AG04450 (cell line): ENCODE measurements at regions of chr5 and their contacts with region 1.

Region 1: DNA sequence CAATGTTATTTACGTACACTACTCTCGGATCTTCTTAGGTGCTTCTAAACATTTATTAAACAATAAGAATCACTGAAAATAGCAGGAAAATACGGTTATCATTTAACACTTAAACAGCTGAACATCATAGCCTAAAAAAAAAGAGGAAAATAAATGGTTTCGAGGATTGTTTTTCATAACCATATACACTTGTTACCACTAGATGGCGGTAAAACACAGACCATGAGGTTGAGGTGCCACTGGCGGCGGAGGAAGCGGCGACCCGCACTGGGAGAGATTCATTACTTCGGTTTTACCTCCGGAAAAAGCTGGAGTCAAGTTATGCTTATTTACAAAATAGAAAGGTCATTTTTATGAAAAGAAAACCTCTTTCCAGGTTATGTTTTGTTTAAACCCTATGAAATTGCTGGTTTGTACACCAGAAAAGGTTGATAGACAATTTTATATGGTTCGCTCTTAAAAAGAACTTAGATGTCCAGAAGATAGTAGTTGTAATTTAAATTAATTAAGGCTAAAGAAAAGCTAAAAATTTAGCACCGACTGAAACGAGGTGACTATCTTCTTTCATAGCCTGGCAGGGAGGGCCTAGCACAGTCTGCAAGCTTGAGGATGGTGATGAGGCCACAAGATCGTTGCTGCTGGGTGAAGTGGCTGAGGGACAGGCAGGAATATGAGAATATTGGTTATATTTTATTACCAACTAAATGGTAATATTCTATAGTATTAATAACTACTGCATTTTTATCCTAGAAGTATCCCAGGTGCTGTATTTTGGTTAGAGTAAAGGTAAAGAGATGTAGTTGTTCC is 605.7 kb downstream of the RAB3C start:
- DNase-seq: no peak
- H3K4me3 ChIP-seq: peak overlapping the region; percentile 28; the same call in 1 of the 2 replicates
- H3K27ac ChIP-seq: no peak overlapping the region
- H3K27me3 ChIP-seq: no peaks in the 10 kb centered on the region
- CTCF ChIP-seq: peak; percentile 72

Region 2: GRCh38 chr5:58818462-58818861 is 370.2 kb before region 1 on chr5:
- CTCF ChIA-PET with region 1: no interaction called
- POLR2A ChIA-PET with region 1: no interaction called
- DNase-seq: no peak
- H3K4me3 ChIP-seq: no peak overlapping the region
- H3K27ac ChIP-seq: no peak overlapping the region
- H3K27me3 ChIP-seq: no peaks in the 10 kb centered on the region
- CTCF ChIP-seq: no peak

Region 3: GRCh38 chr5:59039296-59040023 is 149.2 kb before region 1 on chr5:
- CTCF ChIA-PET with region 1: interaction called, 35 read pairs
- POLR2A ChIA-PET with region 1: no interaction called
- DNase-seq: no peak
- H3K4me3 ChIP-seq: peak overlapping the region; percentile 92
- H3K27ac ChIP-seq: peak overlapping the region; percentile 74
- H3K27me3 ChIP-seq: no peaks in the 10 kb centered on the region
- CTCF ChIP-seq: no peak

Region 4: GRCh38 chr5:59212596-59212995 is 24.0 kb after region 1 on chr5:
- CTCF ChIA-PET with region 1: interaction called, 20 read pairs
- POLR2A ChIA-PET with region 1: no interaction called
- DNase-seq: no peak
- H3K4me3 ChIP-seq: no peak overlapping the region
- H3K27ac ChIP-seq: no peak overlapping the region
- H3K27me3 ChIP-seq: peaks cover 2% of the 10 kb centered on the region
- CTCF ChIP-seq: no peak

Region 5: DNA sequence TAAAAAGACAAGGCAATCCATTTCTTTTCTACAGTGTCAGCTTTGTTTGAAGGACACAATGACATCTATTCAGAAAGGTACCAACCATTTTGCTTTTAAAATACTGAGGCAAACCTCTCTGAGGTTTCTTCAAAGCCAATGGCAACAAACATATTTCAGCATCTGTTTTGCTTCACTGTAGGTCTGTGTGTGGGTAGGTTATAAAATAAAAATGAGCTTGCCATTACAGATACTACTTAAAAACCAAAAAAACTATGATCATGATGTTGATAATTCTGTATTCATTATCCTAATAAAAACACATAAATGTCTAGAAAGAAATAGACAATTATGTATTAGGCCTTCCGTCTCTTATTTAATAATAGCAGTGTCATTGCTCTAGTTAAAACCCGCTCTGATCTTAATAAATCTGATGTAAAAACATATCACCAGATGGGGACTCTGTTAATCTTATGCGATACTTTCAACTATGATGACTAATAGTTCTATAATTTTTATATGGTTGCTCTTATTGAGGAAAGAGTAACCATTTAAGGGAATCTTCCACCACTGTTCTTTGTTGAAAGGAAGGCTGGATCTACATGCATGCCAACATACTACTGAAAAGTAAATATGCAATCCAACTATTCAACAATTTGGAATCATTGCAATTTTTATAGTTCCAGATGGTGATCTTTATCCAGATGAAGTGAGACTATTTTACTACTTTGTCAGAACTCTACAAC is 57.7 kb after region 1 on chr5:
- CTCF ChIA-PET with region 1: interaction called, 11 read pairs
- POLR2A ChIA-PET with region 1: no interaction called
- DNase-seq: peak; percentile 4
- H3K4me3 ChIP-seq: no peak overlapping the region
- H3K27ac ChIP-seq: no peak overlapping the region
- H3K27me3 ChIP-seq: no peaks in the 10 kb centered on the region
- CTCF ChIP-seq: no peak

Region 6: GRCh38 chr5:59367791-59368394 is 179.3 kb after region 1 on chr5:
- CTCF ChIA-PET with region 1: interaction called, 360 read pairs
- POLR2A ChIA-PET with region 1: no interaction called
- DNase-seq: peak; percentile 36
- H3K4me3 ChIP-seq: no peak overlapping the region
- H3K27ac ChIP-seq: no peak overlapping the region
- H3K27me3 ChIP-seq: no peaks in the 10 kb centered on the region
- CTCF ChIP-seq: peak; percentile 88

Region 7: GRCh38 chr5:59390074-59390659 is 201.5 kb after region 1 on chr5:
- CTCF ChIA-PET with region 1: interaction called, 225 read pairs
- POLR2A ChIA-PET with region 1: no interaction called
- DNase-seq: no peak
- H3K4me3 ChIP-seq: no peak overlapping the region
- H3K27ac ChIP-seq: no peak overlapping the region
- H3K27me3 ChIP-seq: no peaks in the 10 kb centered on the region
- CTCF ChIP-seq: peak; percentile 67

Region 8: DNA sequence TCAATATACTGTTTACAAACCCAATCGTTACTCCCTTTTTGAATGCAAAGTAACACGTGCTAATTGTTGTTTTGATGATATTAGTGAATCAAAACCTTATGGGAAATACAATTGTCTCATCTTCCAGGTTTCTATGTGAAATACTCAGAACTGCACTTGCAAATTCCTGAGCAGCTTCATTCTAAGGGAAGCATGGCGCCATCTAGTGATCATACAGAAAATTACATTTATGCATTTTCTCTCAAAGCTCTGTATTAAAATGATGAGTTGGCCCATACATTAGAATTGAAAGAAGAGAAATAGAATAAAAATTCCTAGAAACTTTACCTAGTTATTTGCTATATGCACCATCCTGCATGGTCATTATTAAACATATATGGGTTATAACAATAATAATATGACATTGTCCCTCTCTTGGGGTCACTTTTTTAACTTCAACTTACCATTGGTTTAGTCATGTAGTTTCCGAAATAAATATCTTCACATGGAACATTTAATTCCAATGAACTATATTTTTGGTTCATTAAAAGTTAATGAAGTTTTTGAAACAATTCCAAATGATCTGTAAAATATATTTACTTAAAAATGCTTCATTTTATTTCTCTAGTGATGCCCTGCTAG is 484.9 kb after region 1 on chr5:
- CTCF ChIA-PET with region 1: interaction called, 20 read pairs
- POLR2A ChIA-PET with region 1: no interaction called
- DNase-seq: no peak
- H3K4me3 ChIP-seq: no peak overlapping the region
- H3K27ac ChIP-seq: no peak overlapping the region
- H3K27me3 ChIP-seq: no peaks in the 10 kb centered on the region
- CTCF ChIP-seq: peak; percentile 80